ENCODE measurements at regions of chr2 and their contacts with region 1.

Region 1: DNA sequence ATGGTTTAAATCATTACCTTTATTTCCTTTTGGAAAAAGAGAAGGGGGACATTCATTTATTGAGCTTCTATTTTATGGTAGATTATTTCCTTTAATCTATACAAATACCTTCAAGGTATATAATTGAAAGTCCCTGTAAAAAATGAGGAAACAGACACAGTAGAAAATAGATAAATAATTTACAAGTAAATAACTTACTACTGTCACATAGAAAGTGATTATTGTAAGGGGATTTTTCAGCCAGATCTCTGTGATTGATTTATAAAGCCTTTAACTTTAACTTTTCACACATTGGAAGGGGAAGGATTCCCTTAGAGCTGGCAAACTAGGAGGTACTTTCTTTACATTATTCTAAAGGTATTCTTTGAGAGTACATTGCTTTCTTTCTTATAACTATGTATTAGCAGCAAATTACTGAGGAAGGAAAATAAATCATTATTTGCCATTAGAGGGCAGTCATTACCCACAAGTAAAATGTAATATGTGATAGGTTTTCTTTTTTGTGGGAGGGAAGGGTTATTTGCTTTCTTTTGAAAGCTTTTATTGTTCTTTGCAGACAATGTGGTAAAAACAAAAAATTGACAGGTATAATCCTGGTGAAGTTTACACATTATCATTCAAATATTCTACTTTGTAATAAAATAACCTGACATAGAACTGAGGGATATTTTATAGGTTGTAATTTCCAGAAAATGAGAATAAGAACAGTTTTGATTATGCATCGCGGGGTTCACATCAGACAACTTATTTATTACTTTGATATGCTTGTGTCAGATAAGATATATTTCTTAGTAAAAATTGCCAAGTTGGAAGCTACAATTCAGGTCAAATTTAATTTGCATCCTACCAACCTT is 24.8 kb upstream of the RPE start:
- DNase-seq: peak in 2 of 9 experiments; percentile 59 to 69
- ATAC-seq: peak; percentile 44
- H3K4me3 ChIP-seq: no peak overlapping the region
- H3K4me3 Mint-ChIP-seq: no peak overlapping the region
- H3K27ac ChIP-seq: no peak overlapping the region
- H3K27ac Mint-ChIP-seq: no peak overlapping the region
- H3K4me1 ChIP-seq: no peaks in the 10 kb centered on the region
- H3K4me1 Mint-ChIP-seq: no peaks in the 10 kb centered on the region
- H3K27me3 ChIP-seq: no peaks in the 10 kb centered on the region
- H3K27me3 Mint-ChIP-seq: peaks cover 5% of the 10 kb centered on the region
- CTCF ChIP-seq: peak; percentile 79

Region 2: GRCh38 chr2:208373460-208374089 is 1604.0 kb before region 1 on chr2:
- CTCF ChIA-PET with region 1: no interaction called
- POLR2A ChIA-PET with region 1: no interaction called
- intact Hi-C with region 1: loop called in 1 of 2 experiments (anchors 10 kb)
- DNase-seq: peak in 3 of 9 experiments; percentile 24 to 44 (median 29)
- ATAC-seq: no peak
- H3K4me3 ChIP-seq: no peak overlapping the region
- H3K4me3 Mint-ChIP-seq: no peak overlapping the region
- H3K27ac ChIP-seq: no peak overlapping the region
- H3K27ac Mint-ChIP-seq: no peak overlapping the region
- H3K4me1 ChIP-seq: no peaks in the 10 kb centered on the region
- H3K4me1 Mint-ChIP-seq: no peaks in the 10 kb centered on the region
- H3K27me3 ChIP-seq: no peaks in the 10 kb centered on the region
- H3K27me3 Mint-ChIP-seq: peaks cover 10% of the 10 kb centered on the region
- CTCF ChIP-seq: peak; percentile 90

Region 3: DNA sequence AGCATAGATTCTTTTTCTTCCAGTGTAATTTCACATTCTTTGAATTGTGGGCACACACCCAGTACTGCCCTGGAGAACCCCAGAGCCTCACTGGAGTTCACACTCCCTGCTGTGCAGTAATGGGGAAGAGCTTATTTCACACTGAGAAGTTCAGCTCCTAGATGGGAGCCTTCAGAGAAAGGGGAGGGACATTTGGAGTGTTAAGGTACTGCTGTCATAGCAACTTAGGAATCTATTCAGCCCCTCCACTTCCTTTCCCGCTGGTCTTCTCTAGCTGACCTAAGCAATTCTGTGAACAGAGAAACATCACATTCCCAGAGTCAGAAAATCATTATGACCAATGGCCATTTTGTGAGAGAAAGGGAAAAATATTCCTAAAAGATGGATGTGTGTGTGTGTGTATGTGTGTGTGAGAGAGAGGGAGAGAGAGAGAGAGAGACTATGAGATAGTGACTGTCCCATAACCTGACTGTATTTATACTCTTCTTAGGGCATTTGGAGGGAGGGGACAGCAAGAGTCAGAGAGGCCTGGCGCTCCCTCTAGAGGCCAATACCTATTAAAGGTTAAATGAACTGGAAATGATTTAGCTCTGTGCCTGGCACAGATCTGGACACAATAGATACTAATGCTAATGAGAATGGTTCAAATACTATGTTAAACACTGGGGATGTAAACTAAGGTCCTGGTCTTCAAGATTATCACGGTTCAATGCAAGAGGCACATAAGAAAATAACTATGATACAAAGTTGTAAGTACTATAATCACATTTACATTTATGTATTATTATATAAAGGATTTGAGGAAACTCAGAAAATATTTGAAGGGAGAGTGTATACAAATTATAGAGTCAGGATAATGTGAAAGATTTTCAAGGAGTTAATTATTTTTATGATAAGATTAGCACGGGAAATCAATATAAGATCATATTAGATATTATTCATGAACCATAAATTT is 16.7 kb before region 1 on chr2:
- CTCF ChIA-PET with region 1: interaction called, 10 read pairs
- POLR2A ChIA-PET with region 1: no interaction called
- intact Hi-C with region 1: no loop called
- DNase-seq: peak in 6 of 9 experiments; percentile 2 to 53 (median 23)
- ATAC-seq: no peak
- H3K4me3 ChIP-seq: no peak overlapping the region
- H3K4me3 Mint-ChIP-seq: no peak overlapping the region
- H3K27ac ChIP-seq: no peak overlapping the region
- H3K27ac Mint-ChIP-seq: no peak overlapping the region
- H3K4me1 ChIP-seq: no peaks in the 10 kb centered on the region
- H3K4me1 Mint-ChIP-seq: no peaks in the 10 kb centered on the region
- H3K27me3 ChIP-seq: no peaks in the 10 kb centered on the region
- H3K27me3 Mint-ChIP-seq: no peaks in the 10 kb centered on the region
- CTCF ChIP-seq: peak; percentile 76

Region 4: GRCh38 chr2:210028178-210028577 is 50.6 kb after region 1 on chr2:
- CTCF ChIA-PET with region 1: no interaction called
- POLR2A ChIA-PET with region 1: no interaction called
- intact Hi-C with region 1: no loop called
- DNase-seq: no peak
- ATAC-seq: no peak
- H3K4me3 ChIP-seq: no peak overlapping the region
- H3K4me3 Mint-ChIP-seq: no peak overlapping the region
- H3K27ac ChIP-seq: no peak overlapping the region
- H3K27ac Mint-ChIP-seq: peak overlapping the region; percentile 66
- H3K4me1 ChIP-seq: no peaks in the 10 kb centered on the region
- H3K4me1 Mint-ChIP-seq: no peaks in the 10 kb centered on the region
- H3K27me3 ChIP-seq: no peaks in the 10 kb centered on the region
- H3K27me3 Mint-ChIP-seq: no peaks in the 10 kb centered on the region
- CTCF ChIP-seq: no peak

Region 5: GRCh38 chr2:211157856-211158463 is 1180.3 kb after region 1 on chr2:
- CTCF ChIA-PET with region 1: no interaction called
- POLR2A ChIA-PET with region 1: no interaction called
- intact Hi-C with region 1: loop called in 1 of 2 experiments (anchors 10 kb)
- DNase-seq: peak; percentile 8 to 69 (median 48)
- ATAC-seq: peak; percentile 48
- H3K4me3 ChIP-seq: no peak overlapping the region
- H3K4me3 Mint-ChIP-seq: no peak overlapping the region
- H3K27ac ChIP-seq: no peak overlapping the region
- H3K27ac Mint-ChIP-seq: no peak overlapping the region
- H3K4me1 ChIP-seq: no peaks in the 10 kb centered on the region
- H3K4me1 Mint-ChIP-seq: no peaks in the 10 kb centered on the region
- H3K27me3 ChIP-seq: no peaks in the 10 kb centered on the region
- H3K27me3 Mint-ChIP-seq: no peaks in the 10 kb centered on the region
- CTCF ChIP-seq: peak; percentile 77